Caco-2 (cell line): ENCODE measurements at regions of chr11 and their contacts with region 1.

Region 1: DNA sequence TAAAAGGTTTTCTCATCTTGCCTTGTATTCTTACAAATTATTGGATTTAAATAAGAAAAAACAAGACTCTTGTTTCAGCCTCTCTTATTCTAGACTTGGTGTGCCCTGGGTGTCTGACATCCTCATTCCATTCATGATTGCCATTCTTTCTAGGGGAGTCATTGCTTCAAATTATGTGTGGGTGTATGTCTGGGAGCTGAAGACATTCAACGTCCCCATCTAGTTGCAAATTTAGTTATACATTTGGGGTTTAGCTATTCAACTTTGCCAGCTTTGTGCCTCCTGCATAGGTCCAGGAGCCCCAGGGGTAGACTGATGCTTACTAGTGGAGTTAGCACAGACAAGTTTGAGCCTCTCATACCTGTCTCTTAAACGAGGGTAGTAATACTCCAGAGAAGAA is 18.0 kb downstream of the MAML2 start:
- DNase-seq: peak in 1 of 2 experiments; percentile 52
- H3K4me3 ChIP-seq: no peak overlapping the region
- H3K4me3 Mint-ChIP-seq: peak overlapping the region; percentile 3
- H3K27ac Mint-ChIP-seq: peak overlapping the region; percentile 97
- H3K4me1 ChIP-seq: peaks cover 82% of the 10 kb centered on the region
- H3K4me1 Mint-ChIP-seq: peaks cover 65% of the 10 kb centered on the region
- H3K27me3 ChIP-seq: no peaks in the 10 kb centered on the region
- H3K27me3 Mint-ChIP-seq: no peaks in the 10 kb centered on the region
- CTCF ChIP-seq: no peak

Region 2: DNA sequence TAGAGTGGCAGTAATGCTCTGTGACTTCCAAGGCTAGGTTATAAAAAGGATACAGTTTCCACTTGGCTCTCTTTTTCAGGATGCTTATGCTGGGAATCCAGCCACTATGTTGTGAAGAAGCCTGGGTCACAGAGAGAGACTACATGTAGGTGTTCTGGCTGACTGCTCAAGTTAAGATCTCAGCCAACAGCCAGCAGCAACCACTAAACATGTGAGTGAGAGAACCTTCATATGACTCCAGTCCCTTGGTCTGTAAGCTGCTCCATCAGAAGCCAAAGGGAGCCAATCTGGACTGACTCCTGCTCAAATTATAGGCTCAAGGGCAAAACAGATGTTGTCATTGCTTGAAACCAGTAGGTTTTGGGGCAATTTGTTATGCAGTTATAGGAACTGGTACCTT is 144.6 kb before region 1 on chr11:
- CTCF ChIA-PET with region 1: no interaction called
- POLR2A ChIA-PET with region 1: no interaction called
- intact Hi-C with region 1: no loop called
- DNase-seq: no peak
- H3K4me3 ChIP-seq: no peak overlapping the region
- H3K4me3 Mint-ChIP-seq: no peak overlapping the region
- H3K27ac Mint-ChIP-seq: no peak overlapping the region
- H3K4me1 ChIP-seq: no peaks in the 10 kb centered on the region
- H3K4me1 Mint-ChIP-seq: no peaks in the 10 kb centered on the region
- H3K27me3 ChIP-seq: no peaks in the 10 kb centered on the region
- H3K27me3 Mint-ChIP-seq: no peaks in the 10 kb centered on the region
- CTCF ChIP-seq: no peak

Region 3: GRCh38 chr11:96307776-96308140 is 17.2 kb before region 1 on chr11:
- CTCF ChIA-PET with region 1: no interaction called
- POLR2A ChIA-PET with region 1: no interaction called
- intact Hi-C with region 1: loop called (anchors 1 kb)
- DNase-seq: no peak
- H3K4me3 ChIP-seq: no peak overlapping the region
- H3K4me3 Mint-ChIP-seq: no peak overlapping the region
- H3K27ac Mint-ChIP-seq: no peak overlapping the region
- H3K4me1 ChIP-seq: peaks cover 22% of the 10 kb centered on the region
- H3K4me1 Mint-ChIP-seq: peaks cover 32% of the 10 kb centered on the region
- H3K27me3 ChIP-seq: no peaks in the 10 kb centered on the region
- H3K27me3 Mint-ChIP-seq: no peaks in the 10 kb centered on the region
- CTCF ChIP-seq: no peak

Region 4: GRCh38 chr11:96337541-96338431 is 12.8 kb after region 1 on chr11:
- CTCF ChIA-PET with region 1: interaction called, 9 read pairs
- POLR2A ChIA-PET with region 1: no interaction called
- intact Hi-C with region 1: loop called (anchors 1 kb)
- DNase-seq: peak in 1 of 2 experiments; percentile 64
- H3K4me3 ChIP-seq: no peak overlapping the region
- H3K4me3 Mint-ChIP-seq: peak overlapping the region; percentile 10
- H3K27ac Mint-ChIP-seq: peak overlapping the region; percentile 10
- H3K4me1 ChIP-seq: peaks cover 46% of the 10 kb centered on the region
- H3K4me1 Mint-ChIP-seq: peaks cover 47% of the 10 kb centered on the region
- H3K27me3 ChIP-seq: no peaks in the 10 kb centered on the region
- H3K27me3 Mint-ChIP-seq: no peaks in the 10 kb centered on the region
- CTCF ChIP-seq: no peak